Spleen (tissue), 13 donors: ENCODE measurements at regions of chrX and their contacts with region 1.

Region 1: GRCh38 chrX:9988762-9989161 is 21.6 kb downstream of the CLDN34 start:
- DNase-seq: no peak
- H3K4me3 ChIP-seq: no peak overlapping the region
- H3K27ac ChIP-seq: no peak overlapping the region
- H3K4me1 ChIP-seq: peaks cover 0 to 14% (median 0%) of the 10 kb centered on the region in 6 donors
- H3K27me3 ChIP-seq: no peaks in the 10 kb centered on the region
- CTCF ChIP-seq: peak in 7 of 11 experiments; percentile 14 to 41 (median 29)
- POLR2A ChIP-seq: no peak

Region 2: GRCh38 chrX:9885150-9885549 is 103.6 kb before region 1 on chrX:
- intact Hi-C with region 1: loop called (anchors 10 kb)
- DNase-seq: peak; percentile 89
- H3K4me3 ChIP-seq: no peak overlapping the region
- H3K27ac ChIP-seq: no peak overlapping the region
- H3K4me1 ChIP-seq: peaks cover 0 to 7% (median 0%) of the 10 kb centered on the region in 6 donors
- H3K27me3 ChIP-seq: peaks cover 0 to 20% (median 0%) of the 10 kb centered on the region in 7 donors
- CTCF ChIP-seq: peak; percentile 6 to 70 (median 55)
- POLR2A ChIP-seq: no peak